ENCODE measurements at regions of chr2 and their contacts with region 1.

Region 1: GRCh38 chr2:105287692-105288091 is 41.8 kb downstream of the TGFBRAP1 start:
- DNase-seq: peak; percentile 42
- CTCF ChIP-seq: peak; percentile 43

Region 2: DNA sequence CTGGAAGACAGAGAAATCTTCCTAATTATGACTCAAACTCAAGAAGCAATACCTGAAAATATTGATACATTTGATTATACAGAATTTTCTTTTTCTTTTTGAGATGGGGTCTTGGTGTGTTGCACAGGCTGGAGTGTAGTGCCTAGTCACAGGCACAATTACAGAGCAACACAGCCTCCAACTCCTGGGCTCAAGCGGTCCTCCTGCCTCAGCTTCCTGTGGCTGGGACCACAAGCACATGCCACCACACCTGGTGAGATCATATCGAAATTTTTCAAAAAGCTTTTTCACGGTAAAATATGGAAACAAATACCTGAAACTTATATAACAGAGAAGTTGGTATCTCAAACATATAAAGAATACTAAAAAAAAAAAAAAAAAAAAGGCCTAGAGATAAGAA is 14.0 kb after region 1 on chr2:
- CTCF ChIA-PET with region 1: interaction called, 14 read pairs
- POLR2A ChIA-PET with region 1: no interaction called
- DNase-seq: no peak
- CTCF ChIP-seq: no peak